AG04450 (cell line): ENCODE measurements at regions of chr20 and their contacts with region 1.

Region 1: DNA sequence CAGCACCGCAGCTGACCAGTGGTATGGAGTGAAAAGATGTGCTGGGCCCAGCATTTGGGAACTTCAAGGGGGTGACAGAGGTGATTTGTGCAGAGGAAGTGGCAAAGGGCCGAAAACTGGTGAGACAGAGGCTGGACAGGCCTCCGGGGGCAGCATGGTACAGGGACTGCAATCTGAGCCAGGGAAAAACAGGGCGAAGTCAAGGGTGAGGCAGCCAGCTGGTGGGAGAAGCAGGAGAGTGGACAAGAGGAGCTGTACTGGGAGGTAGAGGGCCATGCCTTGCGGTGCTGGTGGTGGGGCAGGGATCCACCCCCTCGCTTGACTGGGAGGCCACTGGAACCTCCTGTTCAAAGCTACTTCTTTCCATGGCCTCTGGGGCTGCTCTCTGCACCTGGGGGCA is 7.3 kb upstream of the GFRA4 start:
- DNase-seq: no peak
- H3K4me3 ChIP-seq: no peak overlapping the region
- H3K27ac ChIP-seq: no peak overlapping the region
- H3K27me3 ChIP-seq: no peaks in the 10 kb centered on the region
- CTCF ChIP-seq: peak; percentile 38; the same call in 1 of the 2 replicates

Region 2: GRCh38 chr20:4119854-4120209 is 449.3 kb after region 1 on chr20:
- CTCF ChIA-PET with region 1: interaction called, 10 read pairs
- POLR2A ChIA-PET with region 1: no interaction called
- DNase-seq: no peak
- H3K4me3 ChIP-seq: no peak overlapping the region
- H3K27ac ChIP-seq: no peak overlapping the region
- H3K27me3 ChIP-seq: peaks cover 3% of the 10 kb centered on the region
- CTCF ChIP-seq: no peak